CD8-positive, alpha-beta T cell (primary cell): ENCODE measurements at regions of chrX and their contacts with region 1.

Region 1: DNA sequence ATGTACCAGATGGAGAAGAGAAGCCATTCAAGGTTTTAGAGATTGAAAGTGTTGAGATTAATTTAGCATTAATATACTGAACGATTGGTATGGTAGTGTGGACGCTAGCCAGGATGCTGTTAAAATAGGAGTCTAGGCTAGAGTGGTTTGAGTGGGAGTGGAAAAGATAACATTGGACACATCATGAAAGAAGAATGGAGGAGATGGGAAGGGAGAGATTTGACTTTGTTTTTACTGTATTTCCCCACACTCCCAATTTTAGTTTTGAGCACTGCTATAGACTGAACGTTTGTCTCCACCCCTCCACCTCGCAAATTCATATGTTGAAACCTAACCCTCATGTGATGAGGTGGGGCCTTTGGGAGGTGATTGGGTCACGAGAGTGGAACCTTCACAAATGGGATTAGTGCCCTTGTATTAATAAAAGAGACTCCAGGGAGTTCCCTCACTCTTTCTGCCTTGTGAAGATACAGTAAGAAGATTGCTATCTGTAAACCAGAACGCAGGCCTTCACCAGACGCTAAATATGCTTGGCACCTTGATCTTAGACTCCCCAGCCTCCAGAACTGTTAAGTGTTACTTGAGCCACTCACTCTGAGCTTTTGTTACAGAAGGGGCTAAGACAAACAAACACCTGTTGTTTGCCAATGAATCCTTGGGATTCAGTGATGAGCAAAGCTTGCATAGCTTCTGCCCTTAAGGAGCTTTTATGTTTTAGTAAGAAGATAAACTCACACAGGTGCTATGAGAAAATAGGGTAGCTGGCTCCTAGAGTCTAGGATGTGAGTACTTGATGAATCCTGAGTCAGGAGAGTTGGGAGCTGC is 25.8 kb downstream of the USP9X start:
- DNase-seq: peak in 2 of 9 experiments; percentile 11 to 16
- ATAC-seq: no peak
- H3K4me3 ChIP-seq: no peak overlapping the region
- H3K4me3 Mint-ChIP-seq: peak overlapping the region; percentile 29
- H3K27ac ChIP-seq: no peak overlapping the region
- H3K27ac Mint-ChIP-seq: peak overlapping the region; percentile 67
- H3K4me1 ChIP-seq: peaks cover 38% of the 10 kb centered on the region
- H3K4me1 Mint-ChIP-seq: peaks cover 70% of the 10 kb centered on the region
- H3K27me3 ChIP-seq: no peaks in the 10 kb centered on the region
- H3K27me3 Mint-ChIP-seq: no peaks in the 10 kb centered on the region
- CTCF ChIP-seq: no peak

Region 2: DNA sequence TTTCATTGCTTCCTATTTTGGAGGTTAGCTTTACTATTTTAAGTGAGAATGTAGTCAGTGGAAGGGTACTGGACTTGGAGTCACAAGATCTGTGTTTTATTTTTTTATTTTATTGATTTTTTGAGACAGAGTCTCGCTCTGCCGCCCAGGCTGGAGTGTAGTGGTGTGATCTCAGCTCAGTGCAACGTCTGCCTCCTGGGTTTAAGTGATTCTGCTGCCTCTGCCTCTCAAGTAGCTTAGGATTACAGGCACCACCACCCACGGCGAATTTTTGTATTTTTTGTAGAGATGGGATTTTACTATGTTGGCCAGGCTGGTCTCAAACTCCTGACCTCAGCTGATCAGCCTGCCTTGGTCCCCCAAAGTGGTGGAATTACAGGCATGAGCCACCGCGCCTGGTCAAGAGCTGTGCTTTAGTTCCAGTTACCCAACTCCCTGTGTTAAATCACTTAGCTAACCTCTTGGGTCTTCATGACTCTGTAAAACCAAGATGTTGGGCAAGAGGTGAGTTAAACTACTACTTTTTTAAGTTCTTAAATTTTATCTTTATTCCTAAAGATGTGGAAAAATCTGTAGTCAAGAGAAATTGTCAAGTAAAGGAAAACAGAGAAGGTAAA is 14.6 kb before region 1 on chrX:
- CTCF ChIA-PET with region 1: interaction called, 5 read pairs
- POLR2A ChIA-PET with region 1: interaction called, 4 read pairs
- intact Hi-C with region 1: loop called (anchors 2 kb)
- DNase-seq: no peak
- ATAC-seq: no peak
- H3K4me3 ChIP-seq: no peak overlapping the region
- H3K4me3 Mint-ChIP-seq: peak overlapping the region; percentile 56
- H3K27ac ChIP-seq: no peak overlapping the region
- H3K27ac Mint-ChIP-seq: no peak overlapping the region
- H3K4me1 ChIP-seq: peaks cover 59% of the 10 kb centered on the region
- H3K4me1 Mint-ChIP-seq: peaks cover 72% of the 10 kb centered on the region
- H3K27me3 ChIP-seq: no peaks in the 10 kb centered on the region
- H3K27me3 Mint-ChIP-seq: no peaks in the 10 kb centered on the region
- CTCF ChIP-seq: no peak

Region 3: GRCh38 chrX:41245641-41246040 is 134.6 kb after region 1 on chrX:
- CTCF ChIA-PET with region 1: no interaction called
- POLR2A ChIA-PET with region 1: no interaction called
- intact Hi-C with region 1: no loop called
- DNase-seq: no peak
- ATAC-seq: no peak
- H3K4me3 ChIP-seq: no peak overlapping the region
- H3K4me3 Mint-ChIP-seq: no peak overlapping the region
- H3K27ac ChIP-seq: no peak overlapping the region
- H3K27ac Mint-ChIP-seq: no peak overlapping the region
- H3K4me1 ChIP-seq: no peaks in the 10 kb centered on the region
- H3K4me1 Mint-ChIP-seq: no peaks in the 10 kb centered on the region
- H3K27me3 ChIP-seq: no peaks in the 10 kb centered on the region
- H3K27me3 Mint-ChIP-seq: no peaks in the 10 kb centered on the region
- CTCF ChIP-seq: no peak

Region 4: DNA sequence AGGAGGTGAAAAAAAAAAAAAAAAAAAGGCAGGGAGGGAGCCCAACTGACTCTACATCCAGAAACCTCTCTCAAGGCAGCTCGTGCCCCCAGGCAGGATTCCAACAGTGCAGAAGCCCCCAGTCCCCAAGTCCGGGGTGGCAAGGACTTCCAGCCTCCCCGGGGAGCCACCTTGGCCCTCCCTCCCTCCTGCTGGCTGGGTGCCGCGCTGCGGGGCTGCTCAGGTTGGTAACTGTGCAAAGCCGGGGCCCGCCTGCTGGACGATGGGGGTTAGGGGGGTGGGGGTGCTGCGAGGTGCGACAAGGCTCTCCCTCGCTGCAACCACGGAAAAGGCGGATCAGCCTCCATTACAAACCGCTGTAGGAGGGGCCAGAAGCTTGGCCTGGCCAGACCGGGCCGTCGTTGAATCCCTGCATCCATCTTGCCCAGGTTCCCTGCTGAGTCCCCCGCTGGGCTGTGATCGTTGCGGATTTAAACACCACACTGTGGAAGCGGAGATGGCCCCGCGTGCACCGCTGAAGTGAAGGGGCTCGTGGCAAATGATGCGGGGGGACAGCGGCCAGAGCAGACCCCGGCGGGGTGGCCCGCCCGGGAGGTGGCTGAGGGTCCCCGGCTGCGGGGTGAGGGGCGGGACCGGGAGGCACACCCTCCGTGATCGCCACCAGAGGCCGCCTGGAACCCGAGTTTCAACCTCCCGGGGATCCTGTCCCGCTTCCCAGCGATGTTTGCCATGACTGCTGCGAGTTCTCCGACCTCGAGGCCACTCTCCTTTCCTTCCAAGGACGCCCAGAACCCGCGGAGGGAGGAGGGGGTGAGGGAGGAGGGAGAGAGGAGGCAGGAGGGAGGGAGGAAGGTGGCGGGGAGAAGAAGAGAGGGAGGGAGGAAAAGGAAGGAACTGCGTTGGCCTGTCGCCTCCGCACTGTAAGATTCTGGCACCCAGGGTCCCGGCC is 164.9 kb after region 1 on chrX:
- CTCF ChIA-PET with region 1: no interaction called
- POLR2A ChIA-PET with region 1: no interaction called
- intact Hi-C with region 1: no loop called
- DNase-seq: peak in 8 of 9 experiments; percentile 22 to 74 (median 54)
- ATAC-seq: peak; percentile 68
- H3K4me3 ChIP-seq: peak overlapping the region; percentile 52 to 57
- H3K4me3 Mint-ChIP-seq: peak overlapping the region; percentile 80
- H3K27ac ChIP-seq: peak overlapping the region in 1 of 2 experiments; percentile 25
- H3K27ac Mint-ChIP-seq: peak overlapping the region; percentile 37
- H3K4me1 ChIP-seq: no peaks in the 10 kb centered on the region
- H3K4me1 Mint-ChIP-seq: peaks cover 7% of the 10 kb centered on the region
- H3K27me3 ChIP-seq: no peaks in the 10 kb centered on the region
- H3K27me3 Mint-ChIP-seq: no peaks in the 10 kb centered on the region
- CTCF ChIP-seq: peak; percentile 33

Region 5: DNA sequence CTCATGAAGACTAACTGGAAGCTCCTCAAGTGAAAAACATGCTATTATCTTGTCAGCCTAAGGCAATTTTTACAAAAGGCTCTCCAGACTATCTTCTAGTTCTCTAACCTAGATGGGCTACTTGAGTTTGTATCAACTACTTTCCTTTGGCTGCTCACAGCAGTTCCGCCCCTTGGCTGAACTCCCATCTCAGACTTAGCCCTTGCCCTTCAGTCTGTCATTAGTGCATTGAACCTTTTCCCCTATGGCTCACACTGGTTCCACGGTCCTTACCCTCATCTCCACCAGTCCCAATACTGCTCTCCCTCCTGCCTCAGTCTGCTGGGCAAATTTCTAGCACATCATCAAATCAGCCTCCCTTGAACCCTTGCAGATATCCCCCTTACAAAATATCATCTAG is 1304.6 kb after region 1 on chrX:
- CTCF ChIA-PET with region 1: no interaction called
- POLR2A ChIA-PET with region 1: no interaction called
- intact Hi-C with region 1: no loop called
- DNase-seq: no peak
- ATAC-seq: no peak
- H3K4me3 ChIP-seq: no peak overlapping the region
- H3K4me3 Mint-ChIP-seq: no peak overlapping the region
- H3K27ac ChIP-seq: no peak overlapping the region
- H3K27ac Mint-ChIP-seq: no peak overlapping the region
- H3K4me1 ChIP-seq: no peaks in the 10 kb centered on the region
- H3K4me1 Mint-ChIP-seq: peaks cover 5% of the 10 kb centered on the region
- H3K27me3 ChIP-seq: no peaks in the 10 kb centered on the region
- H3K27me3 Mint-ChIP-seq: no peaks in the 10 kb centered on the region
- CTCF ChIP-seq: no peak